Activated B cell treated with CpG ODN at 0.5 μM for 24 hours (primary cell): ENCODE measurements at regions of chr15 and their contacts with region 1.

Region 1: GRCh38 chr15:57259568-57260040 is 116.7 kb upstream of the CGNL1 start:
- DNase-seq: peak; percentile 28
- ATAC-seq: peak; percentile 99
- H3K4me3 Mint-ChIP-seq: peak overlapping the region; percentile 67
- H3K27ac Mint-ChIP-seq: peak overlapping the region; percentile 84
- H3K4me1 Mint-ChIP-seq: peaks cover 18% of the 10 kb centered on the region
- H3K27me3 Mint-ChIP-seq: no peaks in the 10 kb centered on the region
- CTCF ChIP-seq: no peak

Region 2: GRCh38 chr15:57281321-57281720 is 21.7 kb after region 1 on chr15:
- CTCF ChIA-PET with region 1: interaction called, 3 read pairs
- POLR2A ChIA-PET with region 1: interaction called, 12 read pairs
- intact Hi-C with region 1: loop called (anchors 2 kb)
- DNase-seq: no peak
- ATAC-seq: peak; percentile 65
- H3K4me3 Mint-ChIP-seq: peak overlapping the region; percentile 83
- H3K27ac Mint-ChIP-seq: peak overlapping the region; percentile 98
- H3K4me1 Mint-ChIP-seq: peaks cover 79% of the 10 kb centered on the region
- H3K27me3 Mint-ChIP-seq: no peaks in the 10 kb centered on the region
- CTCF ChIP-seq: no peak

Region 3: GRCh38 chr15:57288926-57289580 is 29.4 kb after region 1 on chr15:
- CTCF ChIA-PET with region 1: no interaction called
- POLR2A ChIA-PET with region 1: interaction called, 12 read pairs
- intact Hi-C with region 1: no loop called
- DNase-seq: no peak
- ATAC-seq: no peak
- H3K4me3 Mint-ChIP-seq: no peak overlapping the region
- H3K27ac Mint-ChIP-seq: peak overlapping the region; percentile 84
- H3K4me1 Mint-ChIP-seq: peaks cover 79% of the 10 kb centered on the region
- H3K27me3 Mint-ChIP-seq: no peaks in the 10 kb centered on the region
- CTCF ChIP-seq: no peak